ENCODE measurements at regions of chr1 and their contacts with region 1.

Region 1: GRCh38 chr1:45550401-45551351 is at the start of gene AKR1A1:
- DNase-seq: peak; percentile 78 to 93
- H3K4me3 ChIP-seq: peak within 1 kb of the TSS; percentile 82 to 95 (median 90)
- H3K27ac ChIP-seq: peak within 1 kb of the TSS; percentile 88
- H3K4me1 ChIP-seq: peaks cover 0 to 4% (median 1%) of the 10 kb centered on the region in 4 experiments; a peak in 3 of 7 replicates
- H3K27me3 ChIP-seq: no peaks in the 10 kb centered on the region
- CTCF ChIP-seq: no peak; a peak in 1 of 4 replicates
- EP300 ChIP-seq: peak in 1 of 2 experiments; percentile 10; a peak in 1 of 3 replicates
- POLR2A ChIP-seq: peak; percentile 90 to 99
- RAD21 ChIP-seq: no peak
- total RNA-seq, gene AKR1A1: 334 and 344 TPM in 2 replicates

Region 2: GRCh38 chr1:45499415-45499769 is 51.3 kb before region 1 on chr1:
- CTCF ChIA-PET with region 1: interaction called, 3 read pairs
- POLR2A ChIA-PET with region 1: interaction called, 19 read pairs
- DNase-seq: no peak
- H3K4me3 ChIP-seq: peak overlapping the region; percentile 65 to 86 (median 72)
- H3K27ac ChIP-seq: no peak overlapping the region
- H3K4me1 ChIP-seq: peaks cover 0 to 10% (median 3%) of the 10 kb centered on the region in 4 experiments; a peak in 6 of 7 replicates
- H3K27me3 ChIP-seq: no peaks in the 10 kb centered on the region
- CTCF ChIP-seq: no peak
- EP300 ChIP-seq: no peak
- POLR2A ChIP-seq: no peak
- RAD21 ChIP-seq: no peak

Region 3: DNA sequence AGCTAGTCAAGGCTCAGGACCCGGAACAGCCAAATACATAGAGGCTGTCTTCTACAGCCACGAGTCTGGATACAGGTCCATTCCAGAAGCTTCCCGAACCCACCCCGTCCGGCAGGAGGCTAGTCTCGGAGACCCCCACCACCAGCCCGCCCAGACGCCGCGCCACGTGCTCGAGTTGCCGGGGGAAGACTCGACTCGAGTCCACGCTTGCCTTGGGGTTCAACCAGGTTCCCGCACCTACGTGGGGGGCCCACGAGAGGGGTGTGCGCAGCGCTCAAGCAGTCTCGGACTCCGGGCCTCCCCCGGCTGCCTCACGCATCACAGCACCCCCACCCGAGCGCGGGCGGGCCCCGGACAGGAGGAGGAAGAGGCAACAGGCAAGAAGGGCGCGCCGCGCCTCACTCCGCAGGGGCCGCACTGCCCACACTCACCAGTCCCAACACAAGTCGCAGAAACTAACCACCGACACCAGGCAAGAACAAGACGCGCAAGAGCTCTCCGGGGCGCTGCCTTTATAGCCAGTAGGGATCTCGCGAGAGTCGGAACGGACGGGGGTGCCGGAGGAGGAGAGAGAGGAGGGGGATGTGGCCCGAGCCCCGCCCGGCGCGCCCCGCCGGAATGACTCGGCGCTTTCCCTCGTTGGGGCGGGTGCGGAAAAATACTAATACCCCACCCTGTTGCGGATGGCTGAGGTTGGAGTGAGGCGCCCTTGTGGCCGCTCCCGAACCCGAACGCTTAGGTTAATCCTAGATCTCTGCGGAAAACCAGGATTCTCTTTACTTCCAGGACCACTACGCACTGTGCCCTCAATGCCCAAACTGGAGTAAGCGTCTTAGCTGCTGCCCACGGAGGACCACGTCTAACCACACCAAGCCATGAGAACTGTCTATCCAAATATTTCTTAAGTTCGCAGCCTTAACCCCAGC is 29.0 kb before region 1 on chr1 and contains the start of gene PRDX1:
- CTCF ChIA-PET with region 1: interaction called, 5 read pairs
- POLR2A ChIA-PET with region 1: interaction called, 741 read pairs
- DNase-seq: peak; percentile 91 to 99
- H3K4me3 ChIP-seq: peak within 1 kb of the TSS; percentile 96 to 100 (median 98)
- H3K27ac ChIP-seq: peak within 1 kb of the TSS; percentile 91
- H3K4me1 ChIP-seq: peaks cover 2 to 12% (median 5%) of the 10 kb centered on the region in 4 experiments; a peak in 5 of 7 replicates
- H3K27me3 ChIP-seq: no peaks in the 10 kb centered on the region
- CTCF ChIP-seq: peak in 1 of 3 experiments; percentile 11; a peak in 1 of 4 replicates
- EP300 ChIP-seq: peak in 1 of 2 experiments; percentile 82; a peak in 1 of 3 replicates
- POLR2A ChIP-seq: peak; percentile 100
- RAD21 ChIP-seq: no peak; a peak in 1 of 4 replicates
- total RNA-seq, gene PRDX1: 1,354 and 1,418 TPM in 2 replicates

Region 4: DNA sequence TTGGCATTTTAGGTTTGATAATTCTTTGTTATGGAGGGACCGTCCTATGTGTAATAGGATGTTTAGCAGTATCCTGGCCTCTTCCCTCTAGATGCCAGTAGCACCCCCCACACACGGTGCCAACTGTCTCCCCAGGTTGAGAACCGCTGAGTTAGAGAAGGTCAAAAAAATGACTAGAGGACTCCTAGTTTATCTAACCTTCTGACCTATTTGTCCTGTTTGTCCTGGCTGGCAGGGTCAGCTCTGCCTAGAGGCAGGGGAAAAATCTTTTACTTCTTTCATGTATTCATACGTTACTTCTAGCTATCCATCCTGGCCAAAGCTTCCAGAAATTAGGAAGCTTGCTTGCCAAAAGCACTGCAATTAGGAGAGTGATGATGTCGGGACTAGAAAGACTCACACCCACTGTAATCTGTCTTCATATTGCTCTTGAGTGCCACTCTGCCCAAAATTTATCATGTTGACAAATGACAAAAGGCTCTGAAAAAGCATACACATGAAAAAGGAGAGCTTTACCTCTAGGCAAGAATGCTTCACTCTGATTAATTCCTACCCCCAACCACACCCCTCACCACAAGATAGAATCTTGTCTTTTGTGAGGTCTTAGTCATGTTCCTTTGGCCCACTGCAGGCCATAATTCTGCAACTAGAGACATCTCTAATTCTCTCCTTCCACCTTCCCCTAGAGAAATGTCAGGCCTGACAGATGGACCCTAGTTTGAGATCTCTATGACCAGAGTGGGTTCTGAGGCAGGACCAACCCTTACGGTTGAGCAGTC is 14.5 kb before region 1 on chr1:
- CTCF ChIA-PET with region 1: interaction called, 5 read pairs
- POLR2A ChIA-PET with region 1: interaction called, 16 read pairs
- DNase-seq: no peak
- H3K4me3 ChIP-seq: no peak overlapping the region
- H3K27ac ChIP-seq: no peak overlapping the region
- H3K4me1 ChIP-seq: no peaks in the 10 kb centered on the region
- H3K27me3 ChIP-seq: no peaks in the 10 kb centered on the region
- CTCF ChIP-seq: no peak
- EP300 ChIP-seq: no peak
- POLR2A ChIP-seq: no peak
- RAD21 ChIP-seq: no peak

Measured in H1 (cell line).